RWPE1 (cell line): ENCODE measurements at regions of chr16 and their contacts with region 1.

Region 1: GRCh38 chr16:69123910-69124309 is 8.5 kb downstream of the CHTF8 start:
- DNase-seq: peak; percentile 55
- H3K27ac ChIP-seq: no peak overlapping the region
- CTCF ChIP-seq: peak; percentile 64

Region 2: DNA sequence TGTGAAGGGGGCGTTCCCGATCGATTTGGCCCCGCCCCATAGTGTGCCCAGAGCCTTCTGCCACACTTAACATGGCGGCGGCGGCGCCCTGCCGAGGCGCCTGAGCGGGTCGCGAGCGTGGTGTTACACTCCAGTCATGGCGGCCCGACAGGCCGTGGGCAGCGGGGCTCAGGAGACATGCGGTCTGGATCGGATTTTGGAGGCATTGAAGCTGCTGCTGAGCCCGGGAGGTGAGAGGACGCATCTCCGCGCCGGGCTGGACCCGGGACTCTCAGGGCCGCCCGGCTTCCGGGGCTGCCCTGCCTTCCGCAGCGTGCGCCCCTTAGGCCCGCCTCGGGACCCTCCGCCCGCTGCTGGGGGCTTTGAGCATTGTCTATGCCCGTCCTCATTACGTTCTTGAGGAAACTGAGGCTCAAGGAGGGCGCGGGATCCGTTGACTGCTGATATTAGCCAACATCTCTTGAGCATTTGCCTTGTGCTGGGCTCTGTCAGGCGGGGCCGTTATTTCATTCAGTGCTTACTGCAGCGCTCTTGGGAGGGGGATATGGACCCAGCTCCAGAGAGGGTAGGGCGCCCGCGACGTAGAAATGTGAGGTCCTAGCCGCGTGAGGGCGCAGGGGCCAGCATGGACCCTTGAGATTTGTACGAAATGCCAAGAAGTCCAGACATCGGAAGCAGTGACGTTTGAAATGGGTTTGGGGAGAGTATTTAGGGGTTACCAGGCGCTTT is 280.3 kb before region 1 on chr16 and contains the start of gene TANGO6:
- CTCF ChIA-PET with region 1: interaction called, 14 read pairs
- POLR2A ChIA-PET with region 1: no interaction called
- DNase-seq: peak; percentile 73
- H3K27ac ChIP-seq: peak within 1 kb of the TSS; percentile 85
- CTCF ChIP-seq: peak; percentile 45

Region 3: GRCh38 chr16:68893710-68894705 is 229.9 kb before region 1 on chr16:
- CTCF ChIA-PET with region 1: interaction called, 13 read pairs
- POLR2A ChIA-PET with region 1: no interaction called
- DNase-seq: no peak
- H3K27ac ChIP-seq: no peak overlapping the region
- CTCF ChIP-seq: no peak

Region 4: GRCh38 chr16:68902008-68902968 is 221.6 kb before region 1 on chr16:
- CTCF ChIA-PET with region 1: interaction called, 12 read pairs
- POLR2A ChIA-PET with region 1: no interaction called
- DNase-seq: peak; percentile 53
- H3K27ac ChIP-seq: no peak overlapping the region
- CTCF ChIP-seq: peak; percentile 82

Region 5: GRCh38 chr16:69088684-69089083 is 35.2 kb before region 1 on chr16:
- CTCF ChIA-PET with region 1: no interaction called
- POLR2A ChIA-PET with region 1: no interaction called
- DNase-seq: no peak
- H3K27ac ChIP-seq: peak overlapping the region; percentile 66
- CTCF ChIP-seq: no peak

Region 6: GRCh38 chr16:69112285-69113129 is 11.4 kb before region 1 on chr16:
- CTCF ChIA-PET with region 1: interaction called, 36 read pairs
- POLR2A ChIA-PET with region 1: no interaction called
- DNase-seq: no peak
- H3K27ac ChIP-seq: peak overlapping the region; percentile 56
- CTCF ChIP-seq: peak; percentile 70

Region 7: GRCh38 chr16:69143116-69143515 is 19.2 kb after region 1 on chr16:
- CTCF ChIA-PET with region 1: no interaction called
- POLR2A ChIA-PET with region 1: no interaction called
- DNase-seq: no peak
- H3K27ac ChIP-seq: no peak overlapping the region
- CTCF ChIP-seq: no peak